CD8-positive, alpha-beta T cell (primary cell): ENCODE measurements at regions of chr4 and their contacts with region 1.

Region 1: DNA sequence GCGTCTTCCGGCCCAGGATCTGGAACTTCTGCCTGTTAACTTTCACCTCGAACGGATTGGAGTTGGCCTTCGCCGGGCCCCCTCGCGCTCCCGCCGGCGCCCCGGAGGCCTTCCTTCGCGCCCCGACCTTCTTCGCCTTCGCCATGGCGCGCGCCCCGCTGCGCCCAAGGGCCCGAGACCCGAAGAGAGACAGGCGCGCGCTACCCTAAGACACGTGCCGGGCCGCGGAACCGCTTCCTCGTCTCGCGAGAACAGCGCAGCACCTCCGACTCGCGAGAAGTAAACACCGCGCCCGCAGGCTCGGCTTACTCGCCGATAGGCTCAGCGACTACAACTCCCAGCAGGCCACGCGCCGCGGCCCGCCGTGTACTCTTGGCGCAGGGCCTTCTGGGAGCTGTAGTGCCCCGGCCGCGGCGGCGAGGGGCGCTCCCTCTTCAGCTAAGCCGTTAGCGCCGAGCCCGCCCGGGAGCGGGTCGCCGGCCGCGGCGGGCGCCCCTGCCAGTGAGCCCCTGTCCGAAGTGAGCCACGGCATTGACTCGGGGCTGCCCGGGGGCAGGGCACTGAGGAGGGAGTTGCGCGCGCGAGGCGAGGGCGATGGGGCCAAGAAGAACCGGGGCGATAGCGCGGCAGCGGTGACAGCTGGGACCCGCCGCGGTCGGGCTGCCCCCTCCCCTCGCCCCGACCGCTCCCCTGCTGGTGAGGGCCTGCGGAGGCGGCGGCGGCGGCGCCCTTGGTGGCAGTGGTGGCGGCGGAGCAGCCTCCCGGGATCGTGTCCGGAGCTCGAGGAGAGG is at the starts of genes GRK4 and NOP14:
- DNase-seq: peak; percentile 92 to 99 (median 97)
- ATAC-seq: peak; percentile 87
- H3K4me3 ChIP-seq: peak within 1 kb of the TSS; percentile 82 to 86
- H3K4me3 Mint-ChIP-seq: peak within 1 kb of the TSS; percentile 78
- H3K27ac ChIP-seq: peak within 1 kb of the TSS; percentile 74 to 88
- H3K27ac Mint-ChIP-seq: peak within 1 kb of the TSS; percentile 94
- H3K4me1 ChIP-seq: peaks cover 23% of the 10 kb centered on the region
- H3K4me1 Mint-ChIP-seq: peaks cover 43% of the 10 kb centered on the region
- H3K27me3 ChIP-seq: no peaks in the 10 kb centered on the region
- H3K27me3 Mint-ChIP-seq: no peaks in the 10 kb centered on the region
- CTCF ChIP-seq: peak; percentile 45
- total RNA-seq, gene GRK4: 1.2 to 1.3 TPM
- total RNA-seq, gene NOP14: 23.5 to 23.9 TPM

Region 2: GRCh38 chr4:2135083-2135482 is 828.3 kb before region 1 on chr4:
- CTCF ChIA-PET with region 1: no interaction called
- POLR2A ChIA-PET with region 1: no interaction called
- intact Hi-C with region 1: no loop called
- DNase-seq: peak in 6 of 9 experiments; percentile 6 to 66 (median 40)
- ATAC-seq: peak; percentile 71
- H3K4me3 ChIP-seq: no peak overlapping the region
- H3K4me3 Mint-ChIP-seq: peak overlapping the region; percentile 24
- H3K27ac ChIP-seq: no peak overlapping the region
- H3K27ac Mint-ChIP-seq: no peak overlapping the region
- H3K4me1 ChIP-seq: peaks cover 16% of the 10 kb centered on the region
- H3K4me1 Mint-ChIP-seq: peaks cover 18% of the 10 kb centered on the region
- H3K27me3 ChIP-seq: no peaks in the 10 kb centered on the region
- H3K27me3 Mint-ChIP-seq: no peaks in the 10 kb centered on the region
- CTCF ChIP-seq: no peak

Region 3: GRCh38 chr4:2412885-2413716 is 550.3 kb before region 1 on chr4:
- CTCF ChIA-PET with region 1: no interaction called
- POLR2A ChIA-PET with region 1: interaction called, 5 read pairs
- intact Hi-C with region 1: loop called (anchors 1 to 5 kb)
- DNase-seq: peak; percentile 71 to 98 (median 86)
- ATAC-seq: peak; percentile 77
- H3K4me3 ChIP-seq: peak overlapping the region; percentile 25 to 38
- H3K4me3 Mint-ChIP-seq: peak overlapping the region; percentile 73
- H3K27ac ChIP-seq: peak overlapping the region; percentile 87 to 91
- H3K27ac Mint-ChIP-seq: peak overlapping the region; percentile 97
- H3K4me1 ChIP-seq: peaks cover 62% of the 10 kb centered on the region
- H3K4me1 Mint-ChIP-seq: peaks cover 68% of the 10 kb centered on the region
- H3K27me3 ChIP-seq: peaks cover 4 to 7% of the 10 kb centered on the region in 2 experiments
- H3K27me3 Mint-ChIP-seq: peaks cover 4% of the 10 kb centered on the region
- CTCF ChIP-seq: peak; percentile 31

Region 4: DNA sequence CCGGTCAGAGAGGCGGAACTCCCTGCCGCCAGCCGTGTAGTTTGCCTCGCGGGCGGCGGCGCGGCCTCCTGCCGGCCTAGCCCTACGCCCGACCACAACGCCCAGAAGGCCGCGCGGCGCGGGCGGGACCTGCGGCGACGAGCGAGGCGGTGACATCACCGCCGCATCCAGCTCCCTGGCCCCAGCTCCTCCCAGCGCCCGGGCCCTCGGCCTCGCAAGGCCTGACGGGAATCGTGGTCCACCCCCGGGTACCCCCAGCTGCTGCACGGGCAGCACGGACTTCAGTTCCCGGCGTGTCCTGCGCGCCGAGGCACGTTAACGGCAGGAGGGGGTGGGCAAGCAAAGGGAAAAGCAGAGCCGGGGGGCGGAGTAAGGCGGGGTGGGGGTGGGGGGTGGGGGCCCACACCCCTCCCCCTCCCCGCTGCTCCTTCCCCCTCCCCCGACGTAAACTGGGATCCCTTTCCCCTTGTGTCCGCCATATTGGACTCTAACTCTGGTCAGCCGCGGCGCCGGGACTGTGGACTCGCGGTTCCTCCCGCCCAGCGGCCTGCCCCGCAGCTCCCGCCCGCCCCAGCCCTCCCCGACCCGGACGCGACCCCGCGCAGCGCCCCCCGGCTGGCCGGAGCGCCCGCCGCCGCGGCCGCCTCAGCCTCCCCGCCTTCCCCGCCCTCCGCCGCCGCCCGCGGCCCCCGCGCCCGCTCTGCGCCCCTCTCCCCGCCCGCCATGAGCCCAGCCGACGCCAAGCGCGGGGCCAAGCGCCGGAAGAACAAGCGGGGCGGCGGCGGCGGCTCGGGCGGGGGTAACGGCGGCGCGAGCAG is 427.0 kb before region 1 on chr4 and contains the start of gene FAM193A:
- CTCF ChIA-PET with region 1: no interaction called
- POLR2A ChIA-PET with region 1: no interaction called
- intact Hi-C with region 1: loop called (anchors 1 to 2 kb)
- DNase-seq: peak; percentile 97 to 100 (median 99)
- ATAC-seq: peak; percentile 94
- H3K4me3 ChIP-seq: peak within 1 kb of the TSS; percentile 64 to 67
- H3K4me3 Mint-ChIP-seq: peak within 1 kb of the TSS; percentile 90
- H3K27ac ChIP-seq: peak within 1 kb of the TSS; percentile 71 to 76
- H3K27ac Mint-ChIP-seq: peak within 1 kb of the TSS; percentile 92
- H3K4me1 ChIP-seq: peaks cover 26% of the 10 kb centered on the region
- H3K4me1 Mint-ChIP-seq: peaks cover 29% of the 10 kb centered on the region
- H3K27me3 ChIP-seq: no peaks in the 10 kb centered on the region
- H3K27me3 Mint-ChIP-seq: no peaks in the 10 kb centered on the region
- CTCF ChIP-seq: no peak
- total RNA-seq, gene FAM193A: 29.0 to 30.2 TPM

Region 5: DNA sequence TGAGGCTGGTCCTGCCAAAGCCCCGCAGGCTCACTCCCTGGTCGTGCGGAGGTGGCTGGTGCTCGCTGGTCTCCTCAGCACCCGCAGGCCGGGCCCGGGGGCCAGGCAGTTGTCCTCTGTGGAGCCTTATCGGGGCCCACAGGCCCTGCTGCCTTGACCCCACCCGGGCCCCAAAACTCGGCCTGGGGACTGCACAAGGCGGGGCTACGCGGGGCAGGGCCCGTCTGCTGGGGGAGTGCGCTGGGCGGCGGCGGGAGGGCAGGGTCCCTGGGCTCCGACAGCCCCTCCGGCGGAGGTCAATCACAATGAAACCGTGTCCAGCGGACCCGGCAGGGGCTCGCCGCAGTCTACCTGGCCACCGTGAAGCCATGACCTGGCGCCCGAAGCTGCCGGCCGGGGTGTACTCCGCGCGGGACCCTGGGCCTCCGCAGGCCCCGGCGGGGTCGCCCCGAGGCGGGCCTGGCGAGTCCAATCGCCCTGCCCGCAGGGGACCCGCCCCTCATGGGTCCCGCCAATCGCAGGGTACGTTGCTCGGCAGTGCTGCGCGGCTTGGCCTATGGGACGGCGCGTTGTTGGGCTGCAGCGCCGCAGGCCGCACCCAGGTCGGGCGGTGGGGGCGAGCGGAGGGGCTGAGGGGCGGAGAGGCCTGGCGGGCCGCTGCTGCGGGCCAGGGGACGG is 120.0 kb before region 1 on chr4 and contains the start of gene ADD1:
- CTCF ChIA-PET with region 1: no interaction called
- POLR2A ChIA-PET with region 1: interaction called, 3 read pairs
- intact Hi-C with region 1: loop called (anchors 2 to 5 kb)
- DNase-seq: peak; percentile 84 to 100 (median 96)
- ATAC-seq: peak; percentile 93
- H3K4me3 ChIP-seq: peak within 1 kb of the TSS; percentile 65 to 94
- H3K4me3 Mint-ChIP-seq: peak within 1 kb of the TSS; percentile 94
- H3K27ac ChIP-seq: peak within 1 kb of the TSS; percentile 71 to 78
- H3K27ac Mint-ChIP-seq: peak within 1 kb of the TSS; percentile 95
- H3K4me1 ChIP-seq: peaks cover 42% of the 10 kb centered on the region
- H3K4me1 Mint-ChIP-seq: peaks cover 64% of the 10 kb centered on the region
- H3K27me3 ChIP-seq: no peaks in the 10 kb centered on the region
- H3K27me3 Mint-ChIP-seq: no peaks in the 10 kb centered on the region
- CTCF ChIP-seq: no peak
- total RNA-seq, gene ADD1: 129 TPM

Region 6: GRCh38 chr4:3047464-3048286 is 84.3 kb after region 1 on chr4:
- CTCF ChIA-PET with region 1: no interaction called
- POLR2A ChIA-PET with region 1: no interaction called
- intact Hi-C with region 1: loop called in 1 of 2 experiments (anchors 5 kb)
- DNase-seq: peak; percentile 44 to 87 (median 64)
- ATAC-seq: peak; percentile 73
- H3K4me3 ChIP-seq: peak overlapping the region; percentile 44 to 50
- H3K4me3 Mint-ChIP-seq: peak overlapping the region; percentile 78
- H3K27ac ChIP-seq: peak overlapping the region; percentile 27 to 79
- H3K27ac Mint-ChIP-seq: peak overlapping the region; percentile 60
- H3K4me1 ChIP-seq: peaks cover 15% of the 10 kb centered on the region
- H3K4me1 Mint-ChIP-seq: peaks cover 29% of the 10 kb centered on the region
- H3K27me3 ChIP-seq: no peaks in the 10 kb centered on the region
- H3K27me3 Mint-ChIP-seq: no peaks in the 10 kb centered on the region
- CTCF ChIP-seq: peak; percentile 61